GM12878 (cell line): ENCODE measurements at regions of chr9 and their contacts with region 1.

Region 1: DNA sequence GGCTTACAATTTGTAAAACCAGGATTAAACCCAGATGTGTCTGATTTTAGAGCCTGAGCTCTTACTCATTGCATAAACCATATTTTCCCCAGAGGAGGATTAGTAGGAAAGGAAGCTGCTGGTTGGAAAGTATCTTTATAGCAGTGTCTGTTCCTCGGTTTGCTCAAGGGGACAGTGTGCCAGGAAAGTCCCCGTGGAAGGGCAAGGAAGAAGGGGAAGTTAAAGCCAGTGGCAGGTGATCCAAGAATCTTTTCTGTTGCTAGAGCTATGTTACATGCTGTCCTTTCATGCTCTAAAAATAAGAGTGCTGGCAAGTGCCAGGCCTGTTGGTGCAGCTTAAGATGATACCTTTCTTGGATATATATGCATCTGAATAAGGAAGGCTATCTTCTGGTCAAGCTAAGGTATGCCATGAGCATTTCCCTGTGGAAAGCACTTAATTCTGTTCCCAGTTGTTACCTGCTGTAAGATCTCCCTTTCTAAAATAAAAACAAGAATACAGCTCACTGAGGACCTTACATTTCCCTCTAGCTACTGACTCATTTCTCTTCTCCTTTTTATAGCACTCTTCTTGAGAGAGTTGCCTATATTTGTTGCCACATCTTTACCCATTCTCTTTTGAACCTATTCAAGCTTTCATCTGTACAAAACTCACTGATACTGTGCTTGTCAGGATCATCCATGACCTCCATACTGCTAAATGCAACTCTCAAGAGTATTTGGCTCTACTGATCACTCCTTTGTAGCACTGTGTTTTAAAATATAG is 8.0 kb downstream of the PDCD1LG2 start:
- DNase-seq: no peak
- ATAC-seq: peak; percentile 49
- H3K4me3 ChIP-seq: peak overlapping the region; percentile 35; the same call in 1 of the 2 replicates
- H3K27ac ChIP-seq: peak overlapping the region; percentile 58
- H3K4me1 ChIP-seq: peaks cover 47% of the 10 kb centered on the region
- H3K27me3 ChIP-seq: no peaks in the 10 kb centered on the region
- CTCF ChIP-seq: no peak
- EP300 ChIP-seq: no peak
- POLR2A ChIP-seq: no peak
- RAD21 ChIP-seq: 0 out of 2 replicates have a peak, but pooled peaks have one; percentile 17

Region 2: DNA sequence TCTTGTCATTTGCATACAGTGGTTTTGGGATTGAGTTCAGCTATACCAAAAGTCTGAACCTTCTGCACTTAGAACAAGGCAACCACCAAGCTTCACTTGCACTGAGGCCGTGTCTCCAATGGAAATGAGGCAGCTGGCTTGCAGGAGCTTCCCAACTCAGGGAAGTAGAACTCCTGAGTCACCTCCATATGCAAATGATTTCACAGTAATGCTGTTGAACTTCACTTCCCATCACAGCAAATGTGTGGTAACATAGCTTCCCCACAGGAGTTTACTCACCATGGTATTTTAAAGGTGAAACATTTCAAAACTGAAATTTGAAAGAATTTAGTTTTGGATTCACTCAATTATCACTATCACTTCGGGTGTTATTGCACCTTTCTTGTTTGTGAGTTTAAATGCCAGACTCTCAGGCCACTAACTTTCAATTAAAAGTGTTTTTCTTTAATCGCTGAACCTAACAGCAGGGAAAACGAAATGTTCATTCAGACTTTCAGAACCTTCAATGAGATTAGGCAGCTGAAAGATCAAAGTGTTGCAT is 59.0 kb before region 1 on chr9:
- CTCF ChIA-PET with region 1: interaction called, 4 read pairs
- POLR2A ChIA-PET with region 1: interaction called, 10 read pairs
- RAD21 ChIA-PET with region 1: interaction called, 22 read pairs
- SMC1A ChIA-PET with region 1: interaction called, 90 read pairs
- in situ Hi-C with region 1: no loop called
- intact Hi-C with region 1: loop called (anchors 2 kb)
- DNase-seq: no peak
- ATAC-seq: peak; percentile 55
- H3K4me3 ChIP-seq: peak overlapping the region; percentile 35
- H3K27ac ChIP-seq: peak overlapping the region; percentile 81
- H3K4me1 ChIP-seq: peaks cover 32% of the 10 kb centered on the region
- H3K27me3 ChIP-seq: no peaks in the 10 kb centered on the region
- CTCF ChIP-seq: no peak
- EP300 ChIP-seq: peak; percentile 69 to 84; a peak in 2 of 4 replicates
- POLR2A ChIP-seq: no peak
- RAD21 ChIP-seq: no peak

Region 3: DNA sequence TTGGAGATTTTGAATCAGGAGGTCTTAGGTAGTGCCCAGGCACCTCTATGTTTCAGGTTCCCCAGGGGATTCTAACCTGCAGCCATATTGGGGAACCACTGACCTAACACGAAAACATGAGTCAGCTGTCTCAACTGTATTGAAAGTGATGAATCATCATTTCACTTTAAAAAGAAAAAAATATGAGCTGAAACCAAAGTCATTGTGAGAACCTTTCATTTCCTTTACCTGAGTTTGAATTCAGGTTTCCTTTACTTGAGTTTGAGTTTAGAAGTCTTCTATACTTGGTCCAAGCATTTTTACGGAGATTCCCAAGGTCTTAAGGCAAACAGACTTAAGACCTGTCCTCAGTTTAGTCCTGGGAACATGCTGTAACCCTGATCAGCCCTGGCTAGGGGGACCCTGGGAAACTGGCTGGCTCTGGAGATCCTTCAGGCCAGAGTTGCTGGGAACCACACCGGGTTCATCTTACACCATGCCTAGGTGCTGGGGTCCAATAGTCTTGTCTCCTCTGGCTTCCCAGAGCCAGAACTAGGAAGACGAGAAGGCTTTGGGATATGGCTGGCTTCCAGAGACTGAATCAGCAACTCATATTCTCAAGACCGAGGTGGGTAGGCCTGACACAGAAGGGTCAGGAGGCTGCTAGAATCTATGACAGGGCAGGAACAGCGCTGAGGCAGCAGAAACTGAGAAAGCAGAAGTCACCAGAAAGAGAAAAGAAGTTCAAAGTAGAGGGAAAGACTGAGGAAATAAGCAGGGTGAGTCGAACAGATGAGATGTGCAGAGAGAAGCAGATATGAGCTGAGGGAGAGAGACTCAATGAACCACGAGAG is 24.5 kb before region 1 on chr9:
- CTCF ChIA-PET with region 1: interaction called, 11 read pairs
- POLR2A ChIA-PET with region 1: interaction called, 68 read pairs
- RAD21 ChIA-PET with region 1: interaction called, 144 read pairs
- SMC1A ChIA-PET with region 1: interaction called, 99 read pairs
- in situ Hi-C with region 1: no loop called
- intact Hi-C with region 1: no loop called
- DNase-seq: peak; percentile 96
- ATAC-seq: peak; percentile 91
- H3K4me3 ChIP-seq: peak overlapping the region; percentile 30; the same call in 1 of the 2 replicates
- H3K27ac ChIP-seq: peak overlapping the region; percentile 92
- H3K4me1 ChIP-seq: peaks cover 16% of the 10 kb centered on the region
- H3K27me3 ChIP-seq: no peaks in the 10 kb centered on the region
- CTCF ChIP-seq: no peak
- EP300 ChIP-seq: peak in 1 of 2 experiments; percentile 65; a peak in 1 of 4 replicates
- POLR2A ChIP-seq: peak; percentile 63
- RAD21 ChIP-seq: 0 out of 2 replicates have a peak, but pooled peaks have one; percentile 9

Region 4: GRCh38 chr9:5566054-5566618 is 47.8 kb after region 1 on chr9:
- CTCF ChIA-PET with region 1: interaction called, 3 read pairs
- POLR2A ChIA-PET with region 1: interaction called, 12 read pairs
- RAD21 ChIA-PET with region 1: interaction called, 34 read pairs
- SMC1A ChIA-PET with region 1: interaction called, 35 read pairs
- in situ Hi-C with region 1: no loop called
- intact Hi-C with region 1: no loop called
- DNase-seq: peak; percentile 91
- ATAC-seq: peak; percentile 91
- H3K4me3 ChIP-seq: no peak overlapping the region
- H3K27ac ChIP-seq: peak overlapping the region; percentile 80
- H3K4me1 ChIP-seq: peaks cover 39% of the 10 kb centered on the region
- H3K27me3 ChIP-seq: no peaks in the 10 kb centered on the region
- CTCF ChIP-seq: no peak
- EP300 ChIP-seq: 0 out of 4 replicates have a peak, but pooled peaks of 1 of the 2 experiments have one; percentile 49
- POLR2A ChIP-seq: no peak
- RAD21 ChIP-seq: no peak

Region 5: GRCh38 chr9:5696884-5697283 is 178.5 kb after region 1 on chr9:
- CTCF ChIA-PET with region 1: no interaction called
- POLR2A ChIA-PET with region 1: no interaction called
- RAD21 ChIA-PET with region 1: no interaction called
- SMC1A ChIA-PET with region 1: no interaction called
- in situ Hi-C with region 1: no loop called
- intact Hi-C with region 1: no loop called
- DNase-seq: peak; percentile 25
- ATAC-seq: peak; percentile 91
- H3K4me3 ChIP-seq: no peak overlapping the region
- H3K27ac ChIP-seq: peak overlapping the region; percentile 9
- H3K4me1 ChIP-seq: peaks cover 2% of the 10 kb centered on the region; the same call in 1 of the 2 replicates
- H3K27me3 ChIP-seq: no peaks in the 10 kb centered on the region
- CTCF ChIP-seq: no peak
- EP300 ChIP-seq: no peak
- POLR2A ChIP-seq: no peak
- RAD21 ChIP-seq: no peak